Aorta (tissue), 5 donors: ENCODE measurements at regions of chr5 and their contacts with region 1.

Region 1: GRCh38 chr5:82635561-82636288 is 357.6 kb upstream of the RPS23 start:
- DNase-seq: no peak
- ATAC-seq: no peak
- H3K4me3 ChIP-seq: no peak overlapping the region
- H3K27ac ChIP-seq: no peak overlapping the region
- H3K4me1 ChIP-seq: peaks cover 0 to 10% of the 10 kb centered on the region in 2 donors
- H3K27me3 ChIP-seq: no peaks in the 10 kb centered on the region

Region 2: DNA sequence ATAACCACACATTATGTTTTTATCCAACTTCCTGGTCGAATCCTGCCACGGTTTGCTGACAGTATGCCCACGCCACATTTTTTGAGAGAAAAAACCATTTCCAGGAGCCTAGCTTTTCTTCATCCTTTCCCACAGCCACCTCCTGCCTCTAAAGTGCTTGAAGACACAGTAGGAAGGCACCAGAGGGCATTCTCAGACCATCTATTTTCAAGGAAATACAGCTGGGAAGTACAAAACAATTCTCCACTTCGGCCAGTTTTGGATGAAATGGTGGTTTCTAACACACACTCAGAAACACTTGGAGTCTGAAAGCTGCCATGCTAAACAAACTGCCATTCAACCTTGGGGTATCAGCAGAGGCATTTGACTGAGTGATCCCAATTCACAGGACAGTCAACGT is 271.2 kb before region 1 on chr5:
- intact Hi-C with region 1: loop called in 1 of 2 experiments (anchors 5 kb)
- DNase-seq: no peak
- ATAC-seq: peak; percentile 81
- H3K4me3 ChIP-seq: no peak overlapping the region
- H3K27ac ChIP-seq: peak overlapping the region in 1 of 2 donors; percentile 74
- H3K4me1 ChIP-seq: peaks cover 0 to 1% of the 10 kb centered on the region in 2 donors
- H3K27me3 ChIP-seq: no peaks in the 10 kb centered on the region

Region 3: DNA sequence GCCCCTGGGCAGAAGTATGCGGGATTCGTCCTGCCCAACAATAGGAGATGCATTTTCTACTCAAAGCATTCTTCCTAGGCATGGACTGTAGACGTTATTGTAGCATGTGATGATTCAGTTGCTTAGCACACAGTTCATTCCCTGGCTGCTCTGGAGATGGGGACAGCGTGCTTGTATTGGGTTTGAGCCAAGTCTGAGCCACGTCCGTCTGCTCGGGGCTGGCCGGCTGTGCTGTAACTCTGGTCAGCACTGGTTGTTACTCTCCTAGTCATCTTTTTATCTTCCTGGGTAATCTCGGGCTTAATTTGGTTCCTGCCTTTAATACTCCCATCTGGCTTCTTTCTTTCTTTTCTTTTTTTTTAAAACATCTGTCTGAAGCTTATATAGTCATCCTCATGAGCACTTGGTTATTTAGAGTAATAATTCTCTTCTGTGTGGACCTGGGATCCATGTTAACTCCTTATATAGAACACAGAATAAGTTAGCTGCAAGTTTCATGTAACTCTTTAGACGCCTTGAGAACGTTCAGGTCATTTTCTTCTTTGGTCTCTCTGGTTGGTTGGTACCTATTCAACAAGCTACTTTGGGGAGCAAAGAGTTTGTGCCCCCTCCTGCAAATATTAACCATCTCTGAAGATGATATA is 238.7 kb before region 1 on chr5:
- intact Hi-C with region 1: loop called in 1 of 2 experiments (anchors 10 kb)
- DNase-seq: peak; percentile 92 to 93
- ATAC-seq: peak; percentile 98
- H3K4me3 ChIP-seq: no peak overlapping the region
- H3K27ac ChIP-seq: peak overlapping the region; percentile 51 to 91
- H3K4me1 ChIP-seq: peaks cover 0 to 1% of the 10 kb centered on the region in 2 donors
- H3K27me3 ChIP-seq: no peaks in the 10 kb centered on the region